IMR-90 (cell line): ENCODE measurements at regions of chr17 and their contacts with region 1.

Region 1: DNA sequence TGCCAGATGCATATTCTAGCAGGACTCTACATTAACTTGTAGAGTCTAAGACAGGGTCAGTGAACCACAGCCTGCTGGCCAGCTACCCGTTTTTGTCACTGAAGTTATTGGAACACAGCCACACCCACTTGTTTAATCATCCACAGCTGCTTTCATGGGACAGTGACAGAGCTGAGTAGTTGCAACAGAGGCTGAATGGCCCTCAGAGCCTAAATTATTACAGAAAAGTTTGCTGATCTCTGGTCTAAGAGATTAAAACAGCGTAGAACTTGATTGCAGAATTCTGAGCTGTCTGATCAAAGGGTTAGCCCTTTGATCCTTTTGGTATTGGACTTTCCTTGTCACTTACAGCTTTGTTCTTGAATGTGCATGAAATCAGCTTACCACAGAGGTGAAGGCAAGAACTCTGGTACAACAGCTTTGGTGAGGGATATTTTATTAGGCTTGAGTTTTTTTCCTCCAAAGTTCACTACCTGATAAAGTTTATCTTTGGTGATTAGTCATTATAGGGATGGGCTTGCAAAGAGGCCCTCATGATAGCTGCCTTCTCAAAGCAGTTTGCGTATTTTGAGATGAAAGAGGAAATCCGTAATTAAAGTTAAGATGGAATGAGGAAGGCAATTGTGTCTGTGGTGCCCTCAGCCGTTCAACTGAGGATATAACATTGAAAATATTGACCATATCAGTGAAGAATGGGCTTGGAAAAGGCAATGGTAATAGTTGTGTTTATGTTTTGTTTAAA is 23.6 kb downstream of the ALDH3A2 start:
- DNase-seq: peak; percentile 8
- ATAC-seq: no peak; the same call in 1 of the 2 replicates
- H3K4me3 ChIP-seq: no peak overlapping the region
- H3K27ac ChIP-seq: no peak overlapping the region
- H3K4me1 ChIP-seq: no peaks in the 10 kb centered on the region
- H3K27me3 ChIP-seq: peaks cover 2% of the 10 kb centered on the region; the same call in 1 of the 2 replicates
- CTCF ChIP-seq: peak; percentile 37
- POLR2A ChIP-seq: no peak
- RAD21 ChIP-seq: peak; percentile 37

Region 2: DNA sequence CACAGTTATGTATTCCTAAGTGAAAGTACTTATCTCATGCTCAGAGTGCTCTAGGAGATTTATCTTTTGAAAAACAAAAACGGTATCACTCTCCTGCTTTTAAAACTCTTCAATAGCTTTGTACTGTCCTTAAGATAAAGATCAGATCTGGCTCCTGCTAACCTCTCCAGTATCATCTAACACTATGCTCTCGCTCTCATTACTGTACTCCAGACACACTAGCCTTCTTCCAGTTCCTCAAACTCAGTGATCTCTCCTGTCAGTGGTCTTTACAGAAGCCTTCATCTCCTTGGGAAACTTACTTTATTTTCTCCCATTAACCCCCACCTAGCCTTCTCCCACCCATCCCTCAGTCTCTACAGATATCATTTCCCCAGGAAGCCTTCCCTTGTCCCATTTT is 185.5 kb after region 1 on chr17:
- CTCF ChIA-PET with region 1: no interaction called
- POLR2A ChIA-PET with region 1: interaction called, 15 read pairs
- dilution Hi-C with region 1: no loop called
- in situ Hi-C with region 1: no loop called
- intact Hi-C with region 1: no loop called
- DNase-seq: no peak
- ATAC-seq: peak; percentile 27; the same call in 1 of the 2 replicates
- H3K4me3 ChIP-seq: no peak overlapping the region
- H3K27ac ChIP-seq: no peak overlapping the region
- H3K4me1 ChIP-seq: no peaks in the 10 kb centered on the region
- H3K27me3 ChIP-seq: no peaks in the 10 kb centered on the region
- CTCF ChIP-seq: no peak
- POLR2A ChIP-seq: no peak
- RAD21 ChIP-seq: no peak